ENCODE measurements at regions of chr9 and their contacts with region 1.

Region 1: DNA sequence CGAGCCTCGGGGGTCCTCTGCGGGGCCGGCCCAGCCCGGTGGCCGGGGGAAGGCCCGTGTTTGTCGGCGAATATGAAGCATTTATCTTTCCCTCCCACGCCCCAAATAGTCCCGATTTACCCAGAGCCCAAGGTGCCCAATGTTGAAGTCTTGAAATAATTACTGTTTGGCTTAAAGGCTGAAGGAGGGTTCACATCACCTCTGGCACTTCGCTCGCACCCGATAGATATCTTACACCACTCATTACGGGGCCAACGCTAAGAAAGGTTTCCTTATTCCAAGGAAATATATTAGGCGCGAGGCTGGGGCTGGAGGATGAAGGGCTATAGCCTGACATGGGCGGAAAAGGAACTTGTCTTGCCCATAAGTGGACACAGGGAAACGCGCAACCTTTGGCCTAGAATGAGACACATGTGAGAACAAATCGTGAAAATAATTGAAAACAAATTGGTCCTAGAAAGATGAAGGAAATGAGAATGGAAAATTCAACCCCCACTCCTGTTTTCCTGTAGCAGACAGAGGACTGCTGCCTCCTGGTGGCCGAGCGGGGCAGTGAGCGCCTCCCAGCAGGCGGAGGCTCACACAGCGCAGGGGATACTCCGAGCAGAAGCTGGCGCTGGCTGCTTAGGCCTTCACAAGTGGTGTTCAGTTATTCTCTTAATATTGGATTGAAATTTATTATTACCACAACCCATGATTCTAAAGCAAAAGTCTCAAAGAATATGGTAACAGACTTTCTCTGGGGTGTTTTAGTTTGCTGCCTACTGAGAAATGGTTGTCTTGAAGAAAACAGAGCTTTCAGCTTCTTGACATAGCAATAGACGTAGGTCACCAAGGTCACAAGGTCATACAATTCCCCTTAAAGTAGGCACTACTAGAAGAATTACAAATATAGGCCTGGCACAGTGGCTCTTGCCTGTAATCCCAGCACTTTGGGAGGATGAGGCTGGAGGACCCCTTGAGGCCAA is 7.9 kb downstream of the CCL21 start:
- DNase-seq: peak; percentile 90

Region 2: DNA sequence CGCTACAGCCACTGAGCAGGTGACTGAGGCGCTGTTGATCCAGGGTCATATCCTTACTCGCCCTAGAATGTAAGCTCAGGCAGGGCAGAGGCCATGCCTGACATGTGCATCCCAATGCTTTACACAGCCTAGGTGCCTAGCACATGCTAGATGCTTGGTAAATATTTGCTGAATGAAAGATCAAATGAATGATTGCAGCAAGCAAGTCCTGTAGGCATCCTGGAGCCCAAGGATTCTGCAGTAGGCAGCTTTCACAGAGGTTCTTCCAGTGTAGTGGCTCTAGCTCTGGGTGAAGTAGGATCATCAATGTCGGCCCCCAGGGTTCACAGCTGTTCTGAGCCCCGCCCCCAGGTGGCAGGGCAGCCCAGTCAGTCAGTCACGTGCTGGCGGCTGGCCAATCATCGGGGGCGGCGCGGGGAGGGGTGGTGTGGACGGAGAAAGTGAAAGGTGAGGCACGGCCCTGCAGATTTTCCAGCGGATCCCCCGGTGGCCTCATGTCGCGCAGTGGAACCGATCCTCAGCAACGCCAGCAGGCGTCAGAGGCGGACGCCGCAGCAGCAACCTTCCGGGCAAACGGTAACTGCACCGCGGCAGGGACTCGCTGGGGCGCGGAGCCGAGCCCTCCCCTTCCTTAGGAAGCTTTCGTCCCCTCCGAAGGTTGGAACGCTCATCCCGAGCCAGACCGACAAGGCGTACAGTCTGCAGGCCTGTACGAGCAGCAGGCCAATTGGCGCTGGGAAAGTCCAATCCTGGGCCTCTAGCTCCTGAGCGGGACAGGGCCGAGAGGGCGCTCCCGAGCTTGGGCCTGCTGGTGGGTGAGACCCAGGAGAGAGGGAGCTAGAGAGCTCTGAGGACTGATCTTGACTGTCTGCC is 55.6 kb before region 1 on chr9 and contains the start of gene GALT:
- intact Hi-C with region 1: loop called (anchors 5 kb)
- DNase-seq: peak; percentile 99
- total RNA-seq, gene GALT: 42.4 TPM

Region 3: GRCh38 chr9:34665381-34666250 is 36.4 kb before region 1 on chr9:
- intact Hi-C with region 1: loop called (anchors 5 kb)
- DNase-seq: peak; percentile 98

Region 4: GRCh38 chr9:34989003-34989945 is 287.2 kb after region 1 on chr9 and contains the start of gene DNAJB5:
- intact Hi-C with region 1: loop called (anchors 10 kb)
- DNase-seq: peak; percentile 99
- total RNA-seq, gene DNAJB5: 133 TPM